Left ventricle myocardium superior (tissue), 1 donor: ENCODE measurements at regions of chr18 and their contacts with region 1.

Region 1: DNA sequence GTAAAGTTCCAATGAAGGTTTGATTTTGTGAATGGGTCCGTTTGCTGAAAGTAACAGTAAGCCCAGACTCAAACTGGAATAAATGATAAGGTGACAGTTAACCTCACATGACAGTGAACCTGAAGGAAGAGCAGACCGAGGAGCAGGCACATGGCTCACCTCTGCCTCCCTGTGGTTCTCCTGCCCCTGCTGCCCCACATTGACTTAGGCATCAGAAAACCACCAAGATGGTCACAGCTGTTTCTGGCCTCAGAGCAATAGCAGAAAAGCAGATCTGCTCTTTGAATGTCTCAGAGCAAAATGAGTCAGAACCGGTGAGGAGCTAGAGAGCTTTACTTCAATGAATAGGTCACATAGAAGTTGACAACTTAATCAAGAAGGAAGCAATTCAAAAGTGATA is 487.6 kb downstream of the METTL4 start:
- DNase-seq: peak; percentile 19
- ATAC-seq: no peak

Region 2: DNA sequence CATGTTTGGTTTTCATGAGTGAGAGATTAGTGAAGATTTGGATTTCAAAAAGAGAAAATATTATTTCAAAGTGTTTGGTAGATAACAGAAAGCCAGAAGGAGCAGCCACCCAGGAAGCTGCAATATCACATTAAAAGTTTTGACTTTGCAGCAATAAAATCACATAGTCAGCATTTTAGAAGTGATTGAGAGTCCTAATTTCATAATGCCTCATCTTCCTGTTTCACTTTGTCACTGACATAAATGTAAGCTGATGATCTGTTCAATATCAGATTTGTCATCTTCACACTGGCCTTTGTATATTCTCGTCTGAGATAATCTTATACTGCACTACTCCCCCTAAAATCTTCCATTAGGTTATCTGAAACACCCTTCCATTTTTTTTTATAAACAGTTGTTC is 488.5 kb before region 1 on chr18:
- intact Hi-C with region 1: loop called (anchors 10 kb)
- DNase-seq: no peak
- ATAC-seq: no peak

Region 3: DNA sequence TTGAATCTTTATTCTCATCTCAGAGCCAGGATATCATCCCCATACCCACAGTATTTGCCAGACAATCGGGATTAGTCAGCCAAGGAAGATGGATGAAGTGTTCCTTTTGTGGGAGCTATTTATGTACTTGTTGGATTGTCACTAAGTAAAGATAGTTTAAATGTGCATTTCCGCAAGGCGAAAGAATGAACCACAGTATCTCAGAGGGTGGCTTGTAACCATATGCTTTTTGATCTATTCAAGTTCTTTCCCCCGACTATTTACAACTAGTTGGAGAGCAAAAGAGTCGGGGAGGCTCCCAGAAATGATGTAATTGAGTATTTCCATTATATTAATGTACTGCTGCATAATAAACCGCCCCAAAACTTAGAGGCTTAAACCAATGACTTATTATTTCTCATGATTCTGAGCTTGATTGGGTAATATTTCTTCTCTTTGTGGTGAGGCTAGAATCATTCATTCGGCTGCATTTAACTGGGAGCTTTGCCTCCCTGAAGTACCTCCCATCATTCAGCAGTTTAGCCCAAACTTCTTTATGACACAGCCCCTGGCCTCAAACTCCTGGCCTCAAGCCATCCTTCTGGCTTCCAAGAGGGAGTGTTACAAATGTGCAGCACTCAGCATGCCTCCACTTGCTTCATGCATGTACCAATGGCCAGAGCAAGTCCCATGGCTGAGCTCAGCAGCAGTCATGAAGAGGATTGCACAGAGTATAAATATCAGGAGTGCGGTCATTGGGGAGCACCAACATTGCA is 64.0 kb after region 1 on chr18:
- intact Hi-C with region 1: no loop called
- DNase-seq: peak; percentile 45
- ATAC-seq: peak; percentile 77

Region 4: DNA sequence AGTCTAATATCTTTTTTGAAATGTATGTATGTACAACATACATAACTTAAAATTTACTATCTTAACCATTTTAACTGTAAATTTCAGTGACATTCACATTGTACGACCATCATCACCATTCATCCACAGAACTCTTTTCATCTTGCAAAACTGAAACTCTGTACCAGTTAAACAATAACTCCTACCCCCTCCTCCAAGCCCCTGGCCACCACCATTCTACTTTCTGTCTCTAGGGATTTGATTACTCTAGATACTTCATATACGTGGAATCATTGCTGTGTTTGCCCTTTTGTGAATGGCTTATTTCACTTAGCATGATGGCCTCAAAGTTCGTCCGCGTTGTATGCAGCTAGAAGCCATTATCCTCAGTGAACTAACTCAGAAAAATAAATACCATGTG is 270.6 kb after region 1 on chr18:
- intact Hi-C with region 1: no loop called
- DNase-seq: no peak
- ATAC-seq: no peak

Region 5: DNA sequence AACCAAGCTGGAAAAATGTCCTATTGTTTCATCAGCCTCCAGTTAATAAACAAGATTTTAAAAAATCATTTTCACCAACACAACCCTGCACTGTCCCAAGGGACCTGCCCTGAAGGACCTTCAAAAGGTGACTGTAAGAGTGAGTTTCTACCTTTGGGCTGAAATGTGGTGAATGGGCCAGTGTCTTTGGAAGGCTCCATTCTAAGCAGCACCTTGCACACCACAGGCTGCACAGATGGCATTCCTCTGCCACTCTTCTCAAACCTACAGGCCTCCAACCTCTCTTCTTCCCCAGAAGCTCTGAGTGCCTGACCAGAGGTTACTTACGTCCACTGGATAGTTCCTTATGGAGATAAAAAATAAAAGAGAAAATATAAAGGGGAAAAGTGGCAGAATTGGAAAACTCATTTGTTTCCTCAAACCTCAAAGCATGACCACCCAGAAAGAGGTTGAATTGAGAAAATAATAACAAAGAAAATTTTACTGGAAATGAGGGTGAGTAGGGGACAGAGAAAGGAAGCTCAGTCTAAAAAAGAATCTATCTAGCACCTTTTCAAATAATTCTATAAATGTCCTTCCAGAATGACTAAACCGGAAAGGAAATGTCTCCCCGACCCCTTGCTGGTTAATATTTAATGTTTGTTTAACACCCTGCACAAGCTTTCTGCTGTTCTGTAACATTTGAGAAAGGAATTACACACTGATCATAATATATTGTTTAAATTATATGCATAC is 311.9 kb after region 1 on chr18:
- intact Hi-C with region 1: no loop called
- DNase-seq: no peak
- ATAC-seq: no peak